ENCODE measurements at regions of chr21 and their contacts with region 1.

Region 1: DNA sequence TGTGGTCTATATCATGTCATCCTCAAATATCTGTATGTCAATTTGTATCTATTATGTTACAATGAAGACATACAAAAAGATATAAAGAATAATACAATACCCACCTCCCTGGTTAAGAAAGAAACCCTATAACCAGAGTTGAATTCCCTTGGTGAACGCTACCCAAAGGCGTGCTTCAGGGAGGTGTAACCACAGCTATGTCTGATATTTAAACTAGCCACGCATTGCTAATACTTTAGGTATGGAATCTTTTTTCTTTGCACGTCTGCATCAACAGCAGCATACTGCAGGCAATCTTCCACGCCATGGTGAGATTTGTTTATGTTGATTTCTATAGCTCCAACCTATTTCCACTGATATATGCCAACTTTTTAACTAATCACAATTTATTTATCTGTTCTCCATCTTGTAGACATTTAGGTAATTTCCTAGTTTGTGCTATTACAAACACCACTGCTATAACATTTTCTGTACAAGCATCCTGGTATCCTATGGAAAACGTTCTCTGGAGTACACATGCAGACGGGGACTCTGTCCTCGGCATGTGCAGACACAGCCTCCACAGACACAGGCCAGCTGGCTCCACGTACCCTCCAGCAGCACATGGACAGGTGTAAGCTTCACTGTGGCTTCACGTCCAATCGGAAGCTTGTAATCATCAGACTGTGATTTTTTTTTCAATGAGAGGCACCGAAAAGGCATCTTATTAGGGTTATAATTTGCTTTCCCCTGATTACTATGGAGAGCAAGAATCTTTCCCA is 58.5 kb downstream of the HSF2BP start:
- DNase-seq: peak; percentile 70
- H3K4me3 Mint-ChIP-seq: peak overlapping the region; percentile 44
- H3K27ac Mint-ChIP-seq: no peak overlapping the region
- H3K4me1 Mint-ChIP-seq: peaks cover 39% of the 10 kb centered on the region
- H3K27me3 Mint-ChIP-seq: no peaks in the 10 kb centered on the region
- CTCF ChIP-seq: no peak

Region 2: DNA sequence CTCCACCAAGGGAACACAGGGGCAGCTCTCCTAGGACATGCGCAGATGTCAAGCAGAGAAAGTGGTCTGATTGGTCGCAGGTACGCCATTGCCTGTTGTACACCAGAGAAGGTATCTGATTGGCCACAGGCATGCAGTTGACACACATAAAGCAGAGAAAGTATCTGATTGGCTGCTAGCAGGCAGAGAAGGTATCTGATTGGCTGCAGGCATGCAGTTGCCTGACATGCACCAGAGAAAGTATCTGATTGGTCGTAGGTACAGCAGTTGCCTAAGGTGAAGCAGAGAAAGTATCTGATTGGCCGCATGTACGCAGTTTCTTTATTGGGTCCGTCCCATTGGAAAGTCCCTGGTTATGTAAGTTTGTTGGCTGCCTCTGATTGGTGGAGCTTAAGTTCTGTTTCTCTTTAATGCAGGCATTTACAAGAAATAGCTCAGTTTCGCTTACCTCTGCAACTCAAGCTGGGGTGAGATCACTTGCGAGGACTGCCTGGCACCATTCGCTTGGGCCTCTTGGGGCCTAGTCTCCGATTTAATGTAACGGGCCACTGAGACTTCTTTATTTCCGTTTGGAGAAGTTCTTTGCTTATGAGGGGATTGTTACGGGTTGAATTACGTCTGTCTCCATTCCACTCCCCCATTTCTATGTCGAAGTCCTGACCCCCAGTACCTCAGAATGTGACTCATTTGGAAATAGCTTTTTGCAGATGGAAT is 248.1 kb before region 1 on chr21:
- CTCF ChIA-PET with region 1: no interaction called
- POLR2A ChIA-PET with region 1: no interaction called
- intact Hi-C with region 1: no loop called
- DNase-seq: peak; percentile 22
- H3K4me3 Mint-ChIP-seq: no peak overlapping the region
- H3K27ac Mint-ChIP-seq: no peak overlapping the region
- H3K4me1 Mint-ChIP-seq: peaks cover 4% of the 10 kb centered on the region
- H3K27me3 Mint-ChIP-seq: no peaks in the 10 kb centered on the region
- CTCF ChIP-seq: no peak

Region 3: DNA sequence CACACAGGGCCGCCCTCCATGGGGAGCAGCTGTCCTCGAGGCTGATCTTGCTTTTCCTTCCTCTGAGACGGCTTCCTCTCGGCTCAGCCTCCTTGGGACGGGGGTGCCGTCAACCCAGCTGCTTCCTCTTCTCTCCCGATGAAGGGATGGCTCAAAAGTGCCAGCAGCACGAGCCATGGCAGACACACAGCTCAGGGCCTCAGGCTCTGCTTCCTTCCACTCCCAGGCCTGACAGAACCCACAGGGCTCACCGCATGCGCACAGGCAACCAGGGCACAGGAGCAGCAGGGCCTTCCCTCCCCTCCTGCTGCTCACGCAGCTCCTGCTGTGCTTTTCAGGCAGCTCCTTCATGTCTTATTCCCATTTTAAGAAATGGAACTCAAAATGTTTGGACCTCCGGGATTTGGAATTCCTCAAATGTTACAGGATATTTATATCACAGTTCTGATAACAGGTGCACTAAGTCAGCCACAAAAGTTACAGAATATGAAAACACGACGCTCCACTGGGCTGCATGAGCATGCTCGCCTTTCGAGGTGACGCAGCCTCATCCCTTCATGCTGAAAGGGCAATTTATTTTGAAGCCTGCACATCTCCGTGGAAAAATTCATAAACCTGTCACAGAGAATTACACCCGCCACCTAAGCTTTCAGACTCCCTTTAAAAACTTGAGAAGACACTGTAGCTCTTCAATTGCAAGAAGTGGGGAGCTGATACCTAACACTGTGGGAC is 25.9 kb before region 1 on chr21:
- CTCF ChIA-PET with region 1: no interaction called
- POLR2A ChIA-PET with region 1: no interaction called
- intact Hi-C with region 1: no loop called
- DNase-seq: no peak
- H3K4me3 Mint-ChIP-seq: no peak overlapping the region
- H3K27ac Mint-ChIP-seq: peak overlapping the region; percentile 2
- H3K4me1 Mint-ChIP-seq: peaks cover 21% of the 10 kb centered on the region
- H3K27me3 Mint-ChIP-seq: no peaks in the 10 kb centered on the region
- CTCF ChIP-seq: no peak

Region 4: GRCh38 chr21:43639470-43640178 is 38.8 kb after region 1 on chr21:
- CTCF ChIA-PET with region 1: interaction called, 5 read pairs
- POLR2A ChIA-PET with region 1: interaction called, 16 read pairs
- intact Hi-C with region 1: no loop called
- DNase-seq: peak; percentile 86
- H3K4me3 Mint-ChIP-seq: no peak overlapping the region
- H3K27ac Mint-ChIP-seq: peak overlapping the region; percentile 92
- H3K4me1 Mint-ChIP-seq: peaks cover 24% of the 10 kb centered on the region
- H3K27me3 Mint-ChIP-seq: no peaks in the 10 kb centered on the region
- CTCF ChIP-seq: no peak